Adrenal gland (tissue), 19 donors: ENCODE measurements at regions of chr21 and their contacts with region 1.

Region 1: DNA sequence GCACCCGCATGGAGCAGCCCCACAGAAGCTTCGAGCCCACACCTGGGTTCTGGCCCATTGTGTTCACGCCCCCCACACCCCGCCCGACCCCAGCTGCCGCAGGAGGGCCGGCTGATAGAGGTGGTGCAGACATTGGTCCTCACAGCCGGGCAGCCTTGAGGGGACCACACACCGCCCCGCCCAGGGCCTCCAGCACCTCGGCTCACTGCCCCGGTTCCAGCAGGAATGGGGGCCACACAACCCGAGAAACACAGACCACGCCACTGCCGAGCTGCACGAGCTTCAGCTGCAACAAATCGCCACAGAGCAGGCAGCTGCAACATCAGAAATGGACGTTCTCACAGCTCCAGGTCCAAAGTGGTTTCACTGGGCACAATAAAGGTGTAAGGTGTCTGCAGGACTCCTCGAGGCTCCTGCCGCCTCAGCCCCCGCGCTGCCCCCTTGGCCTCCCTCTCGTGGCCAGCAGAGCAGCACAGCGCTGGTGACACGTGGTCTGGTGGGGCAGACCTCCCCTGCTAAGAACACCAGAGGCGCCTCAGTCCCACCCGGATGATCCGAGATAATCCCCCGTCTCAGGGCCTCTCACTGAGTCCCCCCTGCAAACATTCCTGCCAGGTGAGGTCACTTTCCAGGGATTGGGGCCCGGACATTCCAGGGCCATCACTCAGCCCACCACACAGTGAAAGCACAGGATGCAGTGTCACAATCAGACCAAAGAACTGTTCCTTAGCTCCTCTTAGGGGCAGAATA is 62.3 kb upstream of the ADARB1 start:
- DNase-seq: peak in 3 of 7 donors; percentile 8 to 12 (median 11)
- H3K4me3 ChIP-seq: no peak overlapping the region
- H3K27ac ChIP-seq: no peak overlapping the region
- H3K4me1 ChIP-seq: no peaks in the 10 kb centered on the region
- H3K27me3 ChIP-seq: no peaks in the 10 kb centered on the region
- CTCF ChIP-seq: no peak
- POLR2A ChIP-seq: no peak

Region 2: DNA sequence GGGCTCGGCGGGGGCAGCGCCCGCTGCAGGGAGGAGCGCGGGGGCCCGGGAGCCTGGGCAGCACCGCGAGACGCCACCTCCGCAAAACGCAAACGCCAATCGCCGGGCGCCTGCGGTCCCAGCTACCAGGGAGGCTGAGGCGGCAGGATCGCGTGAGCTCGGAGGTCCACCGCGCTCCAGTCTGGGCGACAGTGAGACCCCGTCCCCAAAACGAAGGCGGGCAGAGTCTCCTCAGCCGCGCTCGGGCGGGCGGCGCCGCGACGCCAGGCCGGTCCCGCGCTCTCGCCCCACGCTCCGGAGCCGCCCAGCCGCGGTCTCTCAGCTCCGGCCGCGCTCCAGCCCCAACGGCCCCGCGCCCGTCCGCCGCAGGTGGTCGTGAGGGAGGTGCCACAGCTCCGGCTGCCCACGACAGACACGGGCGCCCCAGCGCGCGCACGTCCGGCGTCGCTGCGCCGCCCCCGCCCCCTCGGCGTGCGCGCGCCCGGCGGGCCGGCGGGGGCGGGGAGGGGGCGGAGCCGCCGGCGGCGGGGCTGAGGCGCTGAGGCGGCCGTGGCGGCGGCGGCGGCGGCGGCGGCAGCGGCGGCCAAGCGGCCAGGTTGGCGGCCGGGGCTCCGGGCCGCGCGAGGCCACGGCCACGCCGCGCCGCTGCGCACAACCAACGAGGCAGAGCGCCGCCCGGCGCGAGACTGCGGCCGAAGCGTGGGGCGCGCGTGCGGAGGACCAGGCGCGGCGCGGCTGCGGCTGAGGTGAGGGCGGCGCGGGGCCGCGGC is 62.1 kb after region 1 on chr21 and contains the start of gene ADARB1:
- intact Hi-C with region 1: loop called in 1 of 2 experiments (anchors 10 kb)
- DNase-seq: peak in 6 of 7 donors; percentile 30 to 57 (median 44)
- H3K4me3 ChIP-seq: peak within 1 kb of the TSS; percentile 40 to 94 (median 47)
- H3K27ac ChIP-seq: peak within 1 kb of the TSS in 3 of 5 donors; percentile 70 to 92 (median 84)
- H3K4me1 ChIP-seq: peaks cover 0 to 16% of the 10 kb centered on the region in 2 donors
- H3K27me3 ChIP-seq: no peaks in the 10 kb centered on the region
- CTCF ChIP-seq: peak in 1 of 6 experiments; percentile 5
- POLR2A ChIP-seq: peak; percentile 37 to 53
- total RNA-seq, gene ADARB1: 7.2 to 21.6 (median 18.0) TPM

Region 3: DNA sequence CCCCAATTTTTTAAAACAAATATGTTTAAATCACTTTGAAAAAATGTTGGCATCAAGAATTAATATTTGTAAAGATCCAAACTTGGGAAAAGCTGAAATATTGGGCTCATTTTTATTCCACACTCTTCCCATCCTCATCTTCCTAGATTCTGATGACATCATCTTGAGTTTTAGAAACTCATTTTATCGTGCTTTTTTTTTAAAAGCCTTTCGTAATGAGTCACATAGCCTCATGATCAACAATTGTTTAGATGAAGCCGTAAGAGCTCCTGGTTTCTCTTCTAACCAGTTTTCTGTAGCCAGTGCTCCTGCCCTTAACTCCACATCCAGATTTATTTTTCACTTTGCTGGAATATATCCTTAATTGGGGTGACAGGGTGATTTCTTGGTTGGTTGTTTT is 197.0 kb after region 1 on chr21:
- intact Hi-C with region 1: no loop called
- DNase-seq: no peak
- H3K4me3 ChIP-seq: no peak overlapping the region
- H3K27ac ChIP-seq: no peak overlapping the region
- H3K4me1 ChIP-seq: no peaks in the 10 kb centered on the region
- H3K27me3 ChIP-seq: no peaks in the 10 kb centered on the region
- CTCF ChIP-seq: no peak
- POLR2A ChIP-seq: no peak